HCT116 (cell line): ENCODE measurements at regions of chr10 and their contacts with region 1.

Region 1: DNA sequence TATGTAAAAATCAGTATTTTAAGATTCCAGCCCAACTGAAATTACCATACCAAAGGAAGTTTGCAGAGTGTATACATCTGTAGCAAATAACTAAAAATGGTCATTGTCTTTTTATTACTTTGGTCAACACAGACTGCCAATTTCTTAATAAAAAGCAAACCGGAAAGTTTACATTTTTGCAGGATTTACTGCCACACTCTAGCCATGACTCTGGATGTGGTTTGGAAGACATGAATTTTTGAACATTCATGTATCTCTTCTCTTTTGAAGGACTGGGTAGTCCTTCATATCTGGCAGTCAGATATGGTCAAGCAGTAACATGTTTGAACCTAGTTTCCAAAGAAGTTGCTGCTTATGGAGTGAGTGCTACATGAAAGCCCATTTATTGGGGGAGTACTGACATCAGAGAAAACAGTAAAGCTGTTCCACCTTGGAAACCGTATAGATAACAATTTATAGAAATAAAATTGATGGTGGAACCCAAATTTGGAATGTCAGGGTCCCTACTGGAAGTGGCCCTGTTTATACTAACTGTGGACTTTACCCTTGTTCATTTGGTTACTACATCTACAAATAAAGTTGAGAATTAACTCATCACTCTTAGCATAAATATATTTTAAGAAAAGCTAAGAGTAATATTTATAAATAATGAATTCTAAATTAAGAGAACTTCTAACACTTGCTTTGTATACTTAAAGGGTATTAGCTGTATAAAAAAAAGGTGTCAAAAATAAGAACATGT is 84.6 kb downstream of the ZMYND11 start:
- DNase-seq: no peak
- ATAC-seq: no peak
- H3K4me3 ChIP-seq: no peak overlapping the region
- H3K27ac ChIP-seq: no peak overlapping the region
- H3K4me1 ChIP-seq: no peaks in the 10 kb centered on the region
- H3K27me3 ChIP-seq: no peaks in the 10 kb centered on the region
- CTCF ChIP-seq: no peak
- POLR2A ChIP-seq: no peak
- RAD21 ChIP-seq: no peak

Region 2: GRCh38 chr10:201328-201771 is 18.6 kb before region 1 on chr10:
- CTCF ChIA-PET with region 1: no interaction called
- POLR2A ChIA-PET with region 1: no interaction called
- RAD21 ChIA-PET with region 1: no interaction called
- intact Hi-C with region 1: no loop called
- DNase-seq: no peak
- ATAC-seq: no peak
- H3K4me3 ChIP-seq: no peak overlapping the region
- H3K27ac ChIP-seq: no peak overlapping the region
- H3K4me1 ChIP-seq: no peaks in the 10 kb centered on the region
- H3K27me3 ChIP-seq: no peaks in the 10 kb centered on the region
- CTCF ChIP-seq: no peak
- POLR2A ChIP-seq: no peak
- RAD21 ChIP-seq: no peak

Region 3: GRCh38 chr10:230737-231136 is 10.8 kb after region 1 on chr10:
- CTCF ChIA-PET with region 1: interaction called, 11 read pairs
- POLR2A ChIA-PET with region 1: no interaction called
- RAD21 ChIA-PET with region 1: no interaction called
- intact Hi-C with region 1: no loop called
- DNase-seq: peak; percentile 8
- ATAC-seq: peak; percentile 88
- H3K4me3 ChIP-seq: no peak overlapping the region
- H3K27ac ChIP-seq: no peak overlapping the region
- H3K4me1 ChIP-seq: no peaks in the 10 kb centered on the region
- H3K27me3 ChIP-seq: no peaks in the 10 kb centered on the region
- CTCF ChIP-seq: peak; percentile 32 to 83 (median 79); a peak in 5 of 6 replicates
- POLR2A ChIP-seq: no peak
- RAD21 ChIP-seq: peak; percentile 36

Region 4: GRCh38 chr10:607545-608185 is 387.8 kb after region 1 on chr10:
- CTCF ChIA-PET with region 1: no interaction called
- POLR2A ChIA-PET with region 1: no interaction called
- RAD21 ChIA-PET with region 1: no interaction called
- intact Hi-C with region 1: no loop called
- DNase-seq: no peak
- ATAC-seq: no peak
- H3K4me3 ChIP-seq: no peak overlapping the region
- H3K27ac ChIP-seq: no peak overlapping the region
- H3K4me1 ChIP-seq: no peaks in the 10 kb centered on the region
- H3K27me3 ChIP-seq: no peaks in the 10 kb centered on the region
- CTCF ChIP-seq: no peak
- POLR2A ChIP-seq: no peak
- RAD21 ChIP-seq: no peak